ENCODE measurements at regions of chr17 and their contacts with region 1.

Region 1: DNA sequence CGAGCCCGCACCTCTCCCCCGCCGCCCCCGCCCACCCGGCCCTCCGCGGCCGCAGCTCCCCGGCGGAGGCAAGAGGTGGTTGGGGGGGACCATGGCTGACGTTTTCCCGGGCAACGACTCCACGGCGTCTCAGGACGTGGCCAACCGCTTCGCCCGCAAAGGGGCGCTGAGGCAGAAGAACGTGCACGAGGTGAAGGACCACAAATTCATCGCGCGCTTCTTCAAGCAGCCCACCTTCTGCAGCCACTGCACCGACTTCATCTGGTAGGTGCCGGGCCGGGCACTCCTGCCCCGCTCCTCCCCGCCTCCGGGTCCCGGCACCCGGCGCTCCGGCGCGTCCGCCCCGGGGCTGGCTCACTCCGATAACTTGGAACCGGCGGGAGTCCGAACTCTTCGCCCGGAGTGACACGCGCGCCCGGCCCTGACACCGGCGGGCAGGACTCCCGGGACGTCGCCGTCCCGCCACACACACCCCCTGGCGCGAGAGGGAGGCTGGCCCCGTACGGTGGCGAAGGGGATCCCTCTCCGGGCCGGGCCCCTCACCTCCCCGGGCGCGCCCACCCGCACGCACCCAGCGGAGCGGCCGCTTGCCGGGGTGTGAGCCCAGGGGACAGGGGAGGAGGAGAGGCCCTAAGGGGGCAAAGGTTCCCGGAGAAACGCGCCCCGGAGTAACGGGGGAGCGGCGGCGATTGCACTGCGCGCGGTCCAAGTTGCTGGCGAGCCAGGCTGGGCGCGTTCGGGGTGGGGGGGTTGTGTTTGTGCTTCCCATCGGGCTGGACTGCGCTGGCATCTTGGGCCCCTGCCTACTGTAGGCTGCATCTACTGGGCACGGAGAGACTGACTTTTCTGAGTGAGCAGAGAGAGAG is 581 bp downstream of the PRKCA start:
- DNase-seq: peak; percentile 66
- H3K4me3 Mint-ChIP-seq: peak overlapping the region; percentile 99
- H3K27ac Mint-ChIP-seq: peak overlapping the region; percentile 91
- H3K4me1 Mint-ChIP-seq: peaks cover 32% of the 10 kb centered on the region
- H3K27me3 Mint-ChIP-seq: no peaks in the 10 kb centered on the region

Region 2: DNA sequence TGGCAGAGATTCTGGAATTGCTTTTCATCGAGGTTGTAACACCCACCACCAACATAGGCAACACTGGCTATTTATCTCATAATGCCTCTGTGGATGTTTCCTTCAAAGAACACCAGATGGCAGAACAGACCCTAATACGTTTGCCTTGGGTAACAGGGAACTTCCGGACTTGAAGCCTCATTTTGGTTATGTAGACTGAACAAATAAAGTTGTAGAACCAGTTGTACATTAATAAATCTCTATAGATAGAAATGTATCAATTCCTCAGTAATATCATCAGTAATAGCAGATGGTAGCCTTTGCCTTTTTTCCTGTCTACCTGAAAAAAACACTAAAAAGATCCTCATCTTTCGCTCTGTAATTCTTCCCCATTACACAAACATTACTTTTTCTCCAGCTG is 47.9 kb before region 1 on chr17:
- CTCF ChIA-PET with region 1: no interaction called
- POLR2A ChIA-PET with region 1: no interaction called
- intact Hi-C with region 1: loop called (anchors 1 kb)
- DNase-seq: peak; percentile 28
- H3K4me3 Mint-ChIP-seq: peak overlapping the region; percentile 11
- H3K27ac Mint-ChIP-seq: peak overlapping the region; percentile 24
- H3K4me1 Mint-ChIP-seq: peaks cover 13% of the 10 kb centered on the region
- H3K27me3 Mint-ChIP-seq: no peaks in the 10 kb centered on the region

Region 3: GRCh38 chr17:66331038-66331816 is 28.2 kb after region 1 on chr17:
- CTCF ChIA-PET with region 1: interaction called, 4 read pairs
- POLR2A ChIA-PET with region 1: interaction called, 3 read pairs
- intact Hi-C with region 1: loop called (anchors 1 kb)
- DNase-seq: peak; percentile 36
- H3K4me3 Mint-ChIP-seq: peak overlapping the region; percentile 70
- H3K27ac Mint-ChIP-seq: peak overlapping the region; percentile 92
- H3K4me1 Mint-ChIP-seq: peaks cover 79% of the 10 kb centered on the region
- H3K27me3 Mint-ChIP-seq: no peaks in the 10 kb centered on the region

Region 4: GRCh38 chr17:66373944-66374817 is 71.2 kb after region 1 on chr17:
- CTCF ChIA-PET with region 1: no interaction called
- POLR2A ChIA-PET with region 1: no interaction called
- intact Hi-C with region 1: loop called (anchors 2 kb)
- DNase-seq: peak; percentile 58
- H3K4me3 Mint-ChIP-seq: no peak overlapping the region
- H3K27ac Mint-ChIP-seq: peak overlapping the region; percentile 69
- H3K4me1 Mint-ChIP-seq: peaks cover 70% of the 10 kb centered on the region
- H3K27me3 Mint-ChIP-seq: no peaks in the 10 kb centered on the region

Region 5: GRCh38 chr17:66399441-66399840 is 96.4 kb after region 1 on chr17:
- CTCF ChIA-PET with region 1: interaction called, 5 read pairs
- POLR2A ChIA-PET with region 1: interaction called, 4 read pairs
- intact Hi-C with region 1: loop called (anchors 1 kb)
- DNase-seq: peak; percentile 29
- H3K4me3 Mint-ChIP-seq: peak overlapping the region; percentile 35
- H3K27ac Mint-ChIP-seq: peak overlapping the region; percentile 82
- H3K4me1 Mint-ChIP-seq: peaks cover 83% of the 10 kb centered on the region
- H3K27me3 Mint-ChIP-seq: no peaks in the 10 kb centered on the region

Region 6: DNA sequence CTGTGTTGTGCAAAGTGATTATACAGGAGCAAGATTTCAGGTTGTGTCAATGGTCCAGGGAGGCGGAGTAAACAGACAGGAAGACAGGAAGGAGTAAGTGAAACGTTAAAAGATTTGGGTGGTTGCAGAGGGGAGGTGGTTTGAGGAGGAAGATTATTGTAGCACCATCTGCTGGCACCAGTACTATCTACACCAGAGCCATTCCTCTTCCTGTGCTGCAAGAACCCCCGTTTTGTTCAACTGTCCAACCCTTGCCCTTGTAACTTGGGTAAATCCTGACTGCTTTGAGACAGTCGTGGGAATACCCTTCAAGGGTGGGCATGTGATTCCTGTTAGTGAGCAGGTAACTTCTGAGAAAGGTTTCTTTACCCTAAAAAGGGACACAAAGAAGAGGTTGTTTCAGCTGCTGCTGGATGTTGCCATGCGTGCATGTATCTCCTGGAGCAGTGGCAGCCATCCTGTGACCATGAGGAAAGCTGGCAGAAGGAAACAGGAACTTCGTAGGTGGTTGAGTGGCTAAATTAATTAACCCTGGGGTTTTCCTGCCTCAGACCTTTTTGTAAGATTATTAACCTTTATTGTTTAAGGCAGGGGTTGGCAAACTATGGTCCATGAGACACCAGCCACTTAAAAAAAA is 123.5 kb after region 1 on chr17:
- CTCF ChIA-PET with region 1: interaction called, 5 read pairs
- POLR2A ChIA-PET with region 1: no interaction called
- intact Hi-C with region 1: loop called (anchors 1 kb)
- DNase-seq: peak; percentile 58
- H3K4me3 Mint-ChIP-seq: peak overlapping the region; percentile 14
- H3K27ac Mint-ChIP-seq: peak overlapping the region; percentile 64
- H3K4me1 Mint-ChIP-seq: peaks cover 75% of the 10 kb centered on the region
- H3K27me3 Mint-ChIP-seq: no peaks in the 10 kb centered on the region

Region 7: DNA sequence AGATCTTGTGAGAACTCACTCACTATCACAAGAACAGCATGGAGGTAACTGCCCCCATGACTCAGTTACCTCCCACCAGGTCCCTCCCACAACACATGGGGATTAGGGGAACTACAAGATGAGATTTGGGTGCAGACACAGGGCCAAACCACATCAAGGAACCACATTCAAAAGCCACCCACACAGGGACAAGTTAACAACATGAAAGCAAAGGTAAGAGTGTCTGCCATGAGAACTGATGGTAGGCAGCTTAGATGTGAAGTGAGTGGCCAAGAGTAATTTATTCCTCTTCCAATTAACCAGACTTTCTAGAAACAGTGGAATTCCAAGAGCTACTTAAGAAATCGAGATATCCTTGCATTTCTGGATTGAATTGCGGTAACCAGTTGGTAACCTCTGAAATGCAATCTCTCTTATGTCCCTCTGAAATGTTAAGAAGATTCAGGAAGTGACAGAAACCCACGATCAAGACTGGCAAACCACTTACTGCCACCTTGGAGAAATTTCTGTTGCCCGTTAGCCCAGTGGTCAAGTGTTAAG is 364.6 kb after region 1 on chr17:
- CTCF ChIA-PET with region 1: no interaction called
- POLR2A ChIA-PET with region 1: no interaction called
- intact Hi-C with region 1: loop called (anchors 5 kb)
- DNase-seq: peak; percentile 85
- H3K4me3 Mint-ChIP-seq: peak overlapping the region; percentile 31
- H3K27ac Mint-ChIP-seq: peak overlapping the region; percentile 69
- H3K4me1 Mint-ChIP-seq: peaks cover 80% of the 10 kb centered on the region
- H3K27me3 Mint-ChIP-seq: no peaks in the 10 kb centered on the region

Measured in activated CD4-positive, alpha-beta memory T cell treated with anti-CD3 and anti-CD28 coated beads for 36 hours (primary cell).